ENCODE measurements at regions of chr20 and their contacts with region 1.

Region 1: GRCh38 chr20:16729565-16730456 is at the start of gene SNRPB2:
- DNase-seq: peak; percentile 89
- H3K4me3 ChIP-seq: peak within 1 kb of the TSS; percentile 77 to 96 (median 96)
- H3K27ac ChIP-seq: peak within 1 kb of the TSS; percentile 82
- H3K4me1 ChIP-seq: peaks cover 8% of the 10 kb centered on the region
- H3K27me3 ChIP-seq: no peaks in the 10 kb centered on the region
- CTCF ChIP-seq: peak in 1 of 2 donors; percentile 14
- total RNA-seq, gene SNRPB2: 24.8 to 51.2 TPM

Region 2: DNA sequence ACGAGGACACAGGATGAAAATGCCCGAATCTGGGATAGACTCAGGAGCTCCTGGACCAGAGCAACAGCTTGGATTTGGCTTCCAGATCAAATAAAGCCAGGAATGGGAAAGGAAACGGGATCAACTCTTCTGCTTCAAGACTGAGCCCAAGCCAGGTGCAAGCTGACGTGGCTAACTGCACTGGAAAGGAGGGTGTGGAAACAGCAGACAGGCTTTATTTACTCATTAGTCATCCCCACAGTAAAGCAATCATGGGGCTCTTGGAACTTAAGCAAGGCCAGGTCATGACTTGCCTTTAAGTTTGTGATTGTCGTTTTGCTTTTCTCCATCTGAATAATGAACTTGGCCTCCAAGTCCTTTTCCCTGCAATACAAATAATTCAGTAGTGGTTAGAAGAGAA is 201.7 kb before region 1 on chr20:
- CTCF ChIA-PET with region 1: no interaction called
- dilution Hi-C with region 1: no loop called
- in situ Hi-C with region 1: loop called in 1 of 2 experiments (anchors 25 kb)
- intact Hi-C with region 1: no loop called
- DNase-seq: peak; percentile 92
- H3K4me3 ChIP-seq: peak overlapping the region in 1 of 3 experiments; percentile 22
- H3K27ac ChIP-seq: peak overlapping the region; percentile 92
- H3K4me1 ChIP-seq: peaks cover 14% of the 10 kb centered on the region
- H3K27me3 ChIP-seq: no peaks in the 10 kb centered on the region
- CTCF ChIP-seq: no peak